Ovary (tissue), 10 donors: ENCODE measurements at regions of chr11 and their contacts with region 1.

Region 1: DNA sequence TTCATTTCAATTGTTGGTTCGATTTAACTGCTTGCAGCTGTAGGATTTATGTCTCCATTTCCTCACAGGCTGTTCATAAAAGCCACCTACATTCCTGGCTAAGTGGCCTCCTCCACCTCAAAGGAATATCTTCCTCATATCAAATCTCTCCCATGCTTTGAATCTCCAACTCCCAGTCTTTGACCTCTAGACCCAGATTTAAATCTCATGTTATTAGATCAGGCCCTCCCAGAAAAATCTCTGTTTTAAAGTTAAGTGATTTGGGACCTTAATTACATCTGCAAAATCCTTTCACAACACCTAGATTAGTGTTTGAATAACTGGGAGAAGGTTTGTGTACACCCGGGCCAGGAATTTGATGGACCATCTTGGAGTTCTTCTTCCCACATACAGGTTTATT is 33.9 kb upstream of the POLA2 start:
- DNase-seq: no peak
- H3K4me3 ChIP-seq: no peak overlapping the region
- H3K27ac ChIP-seq: no peak overlapping the region
- H3K4me1 ChIP-seq: peaks cover 4% of the 10 kb centered on the region
- H3K27me3 ChIP-seq: no peaks in the 10 kb centered on the region
- CTCF ChIP-seq: no peak
- EP300 ChIP-seq: no peak
- POLR2A ChIP-seq: no peak

Region 2: DNA sequence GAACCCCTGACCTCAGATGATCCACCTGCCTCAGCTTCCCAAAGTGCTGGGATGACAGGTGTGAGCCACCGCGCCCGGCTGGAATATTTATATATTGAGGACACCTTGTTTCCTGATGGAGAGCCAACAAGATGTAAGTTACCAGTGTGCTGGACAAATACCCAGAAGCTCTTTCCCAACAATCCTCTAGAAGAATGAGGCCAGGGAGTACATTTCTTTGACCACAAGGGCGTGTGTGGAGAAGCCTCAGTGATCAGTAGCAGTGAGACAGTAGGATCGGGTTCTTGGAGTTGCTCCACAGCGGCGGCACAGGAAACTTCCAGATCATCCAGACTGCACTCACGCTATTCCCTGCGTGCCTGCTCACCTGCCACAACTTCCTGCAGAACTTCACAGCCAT is 23.6 kb after region 1 on chr11:
- intact Hi-C with region 1: loop called in 1 of 4 experiments (anchors 2 kb)
- DNase-seq: no peak
- H3K4me3 ChIP-seq: no peak overlapping the region
- H3K27ac ChIP-seq: no peak overlapping the region
- H3K4me1 ChIP-seq: no peaks in the 10 kb centered on the region
- H3K27me3 ChIP-seq: no peaks in the 10 kb centered on the region
- CTCF ChIP-seq: no peak
- EP300 ChIP-seq: no peak
- POLR2A ChIP-seq: no peak